ENCODE measurements at regions of chr3 and their contacts with region 1.

Region 1: DNA sequence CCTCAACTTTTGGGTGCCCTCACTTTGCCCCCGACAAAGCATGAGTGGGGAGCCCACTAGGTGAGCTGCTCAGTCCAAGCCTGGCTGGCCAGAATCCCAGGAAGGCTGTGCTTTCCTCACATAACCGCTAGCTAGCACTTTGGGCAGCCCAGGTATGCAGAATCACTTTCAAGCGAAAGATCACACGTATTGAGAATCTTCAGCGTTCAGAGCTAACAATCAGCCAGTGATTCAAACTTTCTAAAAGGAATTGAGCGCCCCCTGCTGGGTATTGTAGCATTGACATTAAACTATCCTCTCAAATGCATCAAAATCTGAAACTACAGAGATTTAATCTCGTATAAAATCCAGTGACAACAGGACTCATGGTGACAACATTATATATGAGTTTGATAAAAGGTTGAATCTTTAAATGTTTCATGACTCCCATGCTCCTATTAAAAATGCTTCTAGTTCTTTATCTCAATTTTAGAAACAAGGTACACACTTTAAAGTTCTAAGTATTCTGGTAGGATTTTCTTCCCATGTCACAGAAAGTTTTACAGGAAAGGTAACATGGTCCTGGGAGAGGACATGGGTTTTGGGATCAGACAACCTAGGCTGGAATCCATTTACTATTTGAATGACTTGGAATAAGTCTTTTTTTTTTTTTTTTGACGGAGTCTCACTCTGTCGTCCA is 11.8 kb downstream of the ANAPC13 start:
- DNase-seq: peak; percentile 85 to 90
- H3K4me3 ChIP-seq: no peak overlapping the region
- H3K27ac ChIP-seq: no peak overlapping the region
- H3K4me1 ChIP-seq: peaks cover 8 to 51% (median 29%) of the 10 kb centered on the region in 4 donors
- H3K27me3 ChIP-seq: no peaks in the 10 kb centered on the region
- CTCF ChIP-seq: peak in 5 of 7 experiments; percentile 55 to 87 (median 81)
- EP300 ChIP-seq: no peak
- POLR2A ChIP-seq: no peak

Region 2: DNA sequence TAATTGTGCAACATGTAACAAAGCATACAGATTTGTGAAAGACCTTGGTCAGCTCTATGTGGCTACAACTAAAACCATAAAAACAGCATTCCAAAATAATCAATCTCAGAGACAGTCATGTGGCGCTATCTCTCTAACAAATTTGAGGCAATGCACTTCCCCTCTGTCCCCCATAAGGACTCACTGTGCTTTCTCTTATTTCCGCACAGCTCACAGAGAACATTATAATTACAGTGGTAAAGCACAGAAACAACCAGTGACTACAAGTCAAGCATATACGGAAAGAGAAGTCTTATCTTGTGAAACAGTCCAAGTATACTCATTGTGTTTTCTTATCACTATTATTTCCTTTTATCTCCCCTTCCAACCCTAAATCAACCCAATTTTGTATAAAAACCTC is 287.6 kb before region 1 on chr3:
- intact Hi-C with region 1: no loop called
- DNase-seq: no peak
- H3K4me3 ChIP-seq: no peak overlapping the region
- H3K27ac ChIP-seq: no peak overlapping the region
- H3K4me1 ChIP-seq: no peaks in the 10 kb centered on the region
- H3K27me3 ChIP-seq: no peaks in the 10 kb centered on the region
- CTCF ChIP-seq: no peak
- EP300 ChIP-seq: no peak
- POLR2A ChIP-seq: no peak

Region 3: DNA sequence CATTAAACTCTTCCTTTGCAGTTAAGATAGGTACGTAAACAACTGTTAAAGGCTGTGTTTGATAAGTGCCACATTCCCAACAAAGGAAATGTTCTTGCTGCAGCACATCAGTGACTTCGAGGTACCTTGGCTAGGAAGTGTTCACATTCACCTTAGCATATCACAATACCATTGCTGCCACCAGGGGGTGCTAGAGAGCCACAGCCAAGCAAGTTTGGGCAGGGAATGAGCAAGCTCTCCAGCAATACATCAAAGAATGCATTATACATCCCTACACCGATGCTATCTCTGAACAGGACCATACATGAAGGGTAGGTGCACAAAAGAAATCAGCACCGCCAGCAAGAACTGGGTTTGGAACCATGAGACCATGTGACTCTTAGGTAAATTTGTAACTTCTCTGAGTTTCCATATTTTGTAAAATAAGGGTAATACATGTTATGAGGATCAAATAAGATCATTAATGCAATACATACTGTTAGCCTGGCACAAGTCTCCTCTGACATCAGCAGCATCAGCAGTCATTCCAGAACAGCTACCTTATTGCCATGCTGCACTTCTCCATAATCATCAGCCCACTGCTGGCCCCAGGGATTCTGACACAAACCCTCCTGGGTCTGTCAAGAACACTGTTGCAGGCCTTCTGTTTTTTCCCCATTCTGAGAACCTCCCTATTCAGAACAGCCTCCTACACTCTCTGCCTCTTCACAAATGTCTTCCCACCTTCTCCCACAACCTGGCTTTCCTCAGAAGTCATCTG is 260.9 kb before region 1 on chr3:
- intact Hi-C with region 1: loop called (anchors 10 kb)
- DNase-seq: peak; percentile 88 to 92
- H3K4me3 ChIP-seq: no peak overlapping the region
- H3K27ac ChIP-seq: no peak overlapping the region
- H3K4me1 ChIP-seq: peaks cover 0 to 20% (median 6%) of the 10 kb centered on the region in 4 donors
- H3K27me3 ChIP-seq: no peaks in the 10 kb centered on the region
- CTCF ChIP-seq: peak in 6 of 7 experiments; percentile 78 to 99 (median 86)
- EP300 ChIP-seq: no peak
- POLR2A ChIP-seq: no peak

Region 4: DNA sequence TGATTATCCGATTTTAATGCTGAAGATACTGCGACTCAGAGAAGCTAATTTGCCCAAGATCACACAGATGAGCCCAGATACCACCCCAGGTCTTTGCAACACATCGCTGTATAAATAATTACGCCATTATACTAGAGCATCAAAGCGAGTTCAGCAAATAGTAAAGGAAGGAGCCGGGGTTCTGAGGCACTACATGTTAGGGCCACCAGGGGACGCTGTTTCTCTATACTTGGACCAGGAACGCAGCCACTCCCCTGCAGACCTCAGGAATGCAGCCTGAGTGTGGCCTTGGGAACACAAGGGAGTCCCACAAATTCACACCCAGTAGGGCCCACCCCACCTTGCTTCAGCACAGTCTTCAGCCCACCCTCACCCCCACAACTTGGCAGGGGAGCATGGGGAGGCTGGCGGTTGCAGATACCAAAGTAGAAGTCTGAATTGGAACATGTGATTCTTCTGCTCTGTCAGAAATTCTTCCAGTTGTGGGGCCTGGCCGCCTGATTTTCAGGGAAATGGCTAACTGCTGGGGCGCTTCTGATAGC is 165.6 kb before region 1 on chr3:
- intact Hi-C with region 1: loop called (anchors 5 kb)
- DNase-seq: peak; percentile 89 to 94
- H3K4me3 ChIP-seq: peak overlapping the region in 1 of 4 donors; percentile 10
- H3K27ac ChIP-seq: peak overlapping the region in 4 of 5 donors; percentile 63 to 93 (median 92)
- H3K4me1 ChIP-seq: peaks cover 27 to 53% (median 42%) of the 10 kb centered on the region in 4 donors
- H3K27me3 ChIP-seq: peaks cover 0 to 10% (median 1%) of the 10 kb centered on the region in 3 donors
- CTCF ChIP-seq: peak in 6 of 7 experiments; percentile 94 to 100 (median 98)
- EP300 ChIP-seq: no peak
- POLR2A ChIP-seq: no peak

Region 5: DNA sequence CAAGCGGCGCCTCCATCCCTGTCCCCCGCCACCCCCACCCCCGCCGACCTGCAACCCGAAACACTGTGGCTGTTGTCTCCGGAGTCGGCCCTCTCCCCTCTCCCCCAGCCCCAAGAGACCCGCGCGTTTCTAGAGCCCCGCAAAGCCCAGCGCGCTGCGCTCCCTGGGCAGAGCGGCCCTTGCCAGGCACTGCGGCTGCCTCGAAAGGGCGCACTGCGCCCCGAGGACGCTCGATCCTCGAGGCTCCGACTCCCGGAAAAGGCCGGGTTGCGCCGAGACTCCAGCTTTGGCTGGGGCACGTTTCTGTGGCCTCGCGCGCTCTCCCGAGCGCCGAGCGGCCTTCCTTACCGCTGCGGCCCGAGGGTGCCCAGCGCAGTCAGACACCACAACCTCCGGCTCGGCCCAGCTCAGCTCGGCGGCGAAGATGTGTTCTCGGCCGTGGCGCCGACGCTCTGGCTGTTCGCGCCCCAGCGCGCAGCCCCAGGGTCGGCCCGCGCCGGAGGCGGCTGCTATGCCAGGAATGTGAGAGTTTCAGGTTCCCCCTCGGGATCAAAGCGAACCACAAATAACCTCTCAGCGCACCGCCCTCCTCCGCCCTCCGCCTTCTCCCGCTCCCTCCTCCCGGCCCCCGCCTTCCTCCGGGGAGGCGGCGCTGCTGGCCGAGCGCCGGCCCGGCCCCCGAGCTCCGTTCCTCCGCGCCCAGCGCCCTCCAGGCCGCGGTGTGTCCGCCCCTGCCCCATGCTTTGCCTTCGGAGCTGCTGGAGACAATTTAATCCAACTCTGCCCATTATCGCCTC is 99.8 kb before region 1 on chr3 and contains the start of gene AMOTL2:
- intact Hi-C with region 1: loop called (anchors 10 kb)
- DNase-seq: peak; percentile 89 to 97
- H3K4me3 ChIP-seq: peak within 1 kb of the TSS; percentile 57 to 85 (median 61)
- H3K27ac ChIP-seq: peak within 1 kb of the TSS; percentile 93 to 100 (median 98)
- H3K4me1 ChIP-seq: peaks cover 49 to 68% (median 61%) of the 10 kb centered on the region in 4 donors
- H3K27me3 ChIP-seq: peaks cover 0 to 27% (median 0%) of the 10 kb centered on the region in 3 donors
- CTCF ChIP-seq: no peak
- EP300 ChIP-seq: no peak
- POLR2A ChIP-seq: peak in 2 of 4 donors; percentile 69 to 83
- total RNA-seq, gene AMOTL2: 29.3 to 782 (median 54.9) TPM

Region 6: DNA sequence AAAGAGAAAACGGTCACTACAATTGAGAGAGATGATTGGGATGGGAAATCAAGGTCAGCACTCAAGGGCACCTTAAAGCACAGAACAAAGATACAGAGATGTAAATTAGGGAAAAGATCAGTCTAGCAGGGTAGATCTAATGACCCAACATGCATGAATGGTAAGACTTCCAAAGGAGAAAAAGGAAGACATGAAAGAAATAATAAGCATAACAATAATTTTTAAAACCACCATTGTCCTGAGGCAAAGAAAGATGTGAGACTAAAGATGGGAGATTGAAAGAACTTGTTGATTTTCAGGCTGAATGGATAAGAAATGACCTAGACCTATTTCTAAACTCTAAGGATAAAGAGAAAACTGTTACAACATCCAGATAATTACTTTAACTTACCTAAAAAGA is 65.0 kb before region 1 on chr3:
- intact Hi-C with region 1: no loop called
- DNase-seq: no peak
- H3K4me3 ChIP-seq: no peak overlapping the region
- H3K27ac ChIP-seq: no peak overlapping the region
- H3K4me1 ChIP-seq: peaks cover 16 to 33% (median 25%) of the 10 kb centered on the region in 4 donors
- H3K27me3 ChIP-seq: peaks cover 0 to 24% (median 11%) of the 10 kb centered on the region in 3 donors
- CTCF ChIP-seq: no peak
- EP300 ChIP-seq: no peak
- POLR2A ChIP-seq: no peak